Dendritic cell treated with granulocyte-macrophage colony-stimulating factor and Interleukin-4, amounts not matched to agents 40 ng/mL and 50 ng/mL, for 4 days (primary cell): ENCODE measurements at regions of chr11 and their contacts with region 1.

Region 1: DNA sequence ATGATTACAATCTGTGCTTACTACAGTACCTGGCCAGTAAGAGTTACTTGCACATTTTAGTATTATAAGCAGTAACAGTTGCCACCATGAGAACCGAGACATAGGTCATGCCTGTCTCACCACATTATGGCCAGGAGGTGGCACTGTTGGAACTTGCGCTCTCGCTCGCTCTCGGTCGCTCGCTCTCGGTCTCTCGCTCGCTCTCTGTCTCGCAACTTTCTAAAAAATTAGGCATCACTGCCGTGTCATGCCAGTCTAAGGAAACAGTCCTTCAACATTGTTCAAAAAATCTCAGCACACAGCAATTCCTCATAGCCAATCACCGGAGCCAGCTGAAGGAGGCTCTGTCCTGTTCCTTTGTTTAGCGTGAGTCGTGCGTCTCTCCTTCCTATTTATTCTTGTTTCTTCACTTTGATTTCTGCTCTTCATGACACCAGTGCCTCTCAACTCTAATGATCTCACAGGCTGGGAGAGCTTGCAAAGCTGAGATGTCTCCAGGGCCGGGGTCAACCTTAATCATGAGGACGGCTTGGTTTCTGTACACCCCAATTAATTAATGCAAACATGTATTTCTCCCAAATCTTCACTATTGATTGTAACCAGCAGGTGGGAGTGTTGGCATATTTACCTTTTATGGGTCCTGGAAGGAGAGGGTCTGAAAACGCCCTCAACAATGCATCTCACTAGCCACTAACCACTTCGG is 6.3 kb upstream of the ADAMTS8 start:
- H3K4me3 Mint-ChIP-seq: no peak overlapping the region
- H3K27ac Mint-ChIP-seq: no peak overlapping the region
- H3K4me1 Mint-ChIP-seq: peaks cover 12% of the 10 kb centered on the region
- H3K27me3 Mint-ChIP-seq: peaks cover 25% of the 10 kb centered on the region

Region 2: DNA sequence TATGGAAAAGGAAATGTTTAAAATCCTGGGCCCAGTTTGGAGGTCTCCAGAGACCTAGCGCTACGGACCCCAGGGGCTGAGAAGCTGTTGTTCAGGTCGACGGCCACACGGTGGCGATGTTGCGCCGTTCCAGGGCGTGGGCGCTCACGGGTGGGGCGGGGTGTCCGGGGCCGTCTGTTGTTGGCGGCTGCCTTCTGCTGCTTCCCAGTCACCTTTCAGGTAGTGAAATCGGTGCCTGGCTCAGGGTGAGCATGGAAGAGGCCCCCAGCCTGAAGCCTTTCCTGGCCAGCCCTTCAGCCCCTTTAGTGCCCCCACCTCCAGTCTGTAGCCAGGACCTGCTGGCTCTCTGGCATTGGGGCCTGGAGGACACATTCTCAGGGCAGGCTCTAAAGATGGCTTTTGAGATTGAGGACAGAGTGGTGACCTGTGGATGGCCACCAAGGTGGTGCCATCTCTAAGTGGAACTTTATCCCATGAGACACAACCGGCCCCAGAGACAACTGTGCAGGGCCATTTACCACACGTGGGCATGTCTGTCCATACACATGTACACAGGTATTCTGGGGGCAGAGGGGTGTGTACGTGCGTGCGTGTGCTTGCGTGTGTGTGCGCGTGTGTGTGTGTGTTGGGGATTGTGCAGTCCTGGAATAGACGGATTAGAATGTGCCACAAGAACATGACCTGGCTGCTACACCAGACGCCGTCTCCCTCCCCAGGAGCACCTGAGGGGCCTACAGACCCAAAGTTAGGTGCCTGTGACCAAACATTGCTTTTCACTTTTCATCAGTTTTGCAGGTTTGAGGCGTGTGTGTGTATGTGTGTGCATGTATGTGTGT is 221.3 kb before region 1 on chr11:
- intact Hi-C with region 1: loop called (anchors 2 kb)
- H3K4me3 Mint-ChIP-seq: no peak overlapping the region
- H3K27ac Mint-ChIP-seq: no peak overlapping the region
- H3K4me1 Mint-ChIP-seq: no peaks in the 10 kb centered on the region
- H3K27me3 Mint-ChIP-seq: peaks cover 10% of the 10 kb centered on the region

Region 3: GRCh38 chr11:130314750-130315285 is 119.9 kb before region 1 on chr11 and contains the start of gene ZBTB44:
- intact Hi-C with region 1: loop called (anchors 5 kb)
- H3K4me3 Mint-ChIP-seq: peak within 1 kb of the TSS; percentile 83
- H3K27ac Mint-ChIP-seq: peak within 1 kb of the TSS; percentile 84
- H3K4me1 Mint-ChIP-seq: peaks cover 25% of the 10 kb centered on the region
- H3K27me3 Mint-ChIP-seq: peaks cover 11% of the 10 kb centered on the region

Region 4: DNA sequence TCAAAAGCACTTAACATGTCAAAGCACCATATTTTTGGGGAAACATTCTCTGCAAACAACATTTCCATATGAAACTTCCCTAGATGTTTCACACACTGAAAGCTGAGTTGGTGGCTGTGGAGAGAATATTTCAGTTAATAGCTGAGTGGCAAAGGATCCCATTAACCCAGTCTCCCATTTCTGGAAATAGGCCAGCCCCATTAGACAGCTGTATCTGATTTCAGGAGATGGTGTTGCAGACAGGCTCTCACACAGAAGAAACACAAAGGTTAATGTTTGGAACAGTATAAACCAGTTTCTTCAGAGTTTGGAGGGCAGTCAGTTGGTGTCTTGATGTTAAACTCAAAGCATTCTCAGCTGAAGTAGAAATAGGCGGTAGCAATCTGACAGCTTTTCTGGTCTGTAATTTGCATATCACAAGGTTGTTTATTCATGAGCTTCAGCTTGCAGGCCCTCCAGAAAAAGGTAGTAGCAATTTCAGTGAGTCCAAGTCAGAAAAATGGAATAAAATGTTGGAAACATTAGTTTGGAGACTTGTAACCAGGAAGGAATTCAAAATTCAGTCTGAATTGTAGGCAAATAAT is 104.5 kb before region 1 on chr11:
- intact Hi-C with region 1: no loop called
- H3K4me3 Mint-ChIP-seq: no peak overlapping the region
- H3K27ac Mint-ChIP-seq: no peak overlapping the region
- H3K4me1 Mint-ChIP-seq: peaks cover 5% of the 10 kb centered on the region
- H3K27me3 Mint-ChIP-seq: no peaks in the 10 kb centered on the region

Region 5: GRCh38 chr11:130653838-130654636 is 219.4 kb after region 1 on chr11:
- intact Hi-C with region 1: no loop called
- H3K4me3 Mint-ChIP-seq: no peak overlapping the region
- H3K27ac Mint-ChIP-seq: no peak overlapping the region
- H3K4me1 Mint-ChIP-seq: no peaks in the 10 kb centered on the region
- H3K27me3 Mint-ChIP-seq: peaks cover 2% of the 10 kb centered on the region

Region 6: GRCh38 chr11:130666781-130667251 is 232.1 kb after region 1 on chr11:
- intact Hi-C with region 1: loop called (anchors 5 kb)
- H3K4me3 Mint-ChIP-seq: no peak overlapping the region
- H3K27ac Mint-ChIP-seq: no peak overlapping the region
- H3K4me1 Mint-ChIP-seq: no peaks in the 10 kb centered on the region
- H3K27me3 Mint-ChIP-seq: no peaks in the 10 kb centered on the region

Region 7: DNA sequence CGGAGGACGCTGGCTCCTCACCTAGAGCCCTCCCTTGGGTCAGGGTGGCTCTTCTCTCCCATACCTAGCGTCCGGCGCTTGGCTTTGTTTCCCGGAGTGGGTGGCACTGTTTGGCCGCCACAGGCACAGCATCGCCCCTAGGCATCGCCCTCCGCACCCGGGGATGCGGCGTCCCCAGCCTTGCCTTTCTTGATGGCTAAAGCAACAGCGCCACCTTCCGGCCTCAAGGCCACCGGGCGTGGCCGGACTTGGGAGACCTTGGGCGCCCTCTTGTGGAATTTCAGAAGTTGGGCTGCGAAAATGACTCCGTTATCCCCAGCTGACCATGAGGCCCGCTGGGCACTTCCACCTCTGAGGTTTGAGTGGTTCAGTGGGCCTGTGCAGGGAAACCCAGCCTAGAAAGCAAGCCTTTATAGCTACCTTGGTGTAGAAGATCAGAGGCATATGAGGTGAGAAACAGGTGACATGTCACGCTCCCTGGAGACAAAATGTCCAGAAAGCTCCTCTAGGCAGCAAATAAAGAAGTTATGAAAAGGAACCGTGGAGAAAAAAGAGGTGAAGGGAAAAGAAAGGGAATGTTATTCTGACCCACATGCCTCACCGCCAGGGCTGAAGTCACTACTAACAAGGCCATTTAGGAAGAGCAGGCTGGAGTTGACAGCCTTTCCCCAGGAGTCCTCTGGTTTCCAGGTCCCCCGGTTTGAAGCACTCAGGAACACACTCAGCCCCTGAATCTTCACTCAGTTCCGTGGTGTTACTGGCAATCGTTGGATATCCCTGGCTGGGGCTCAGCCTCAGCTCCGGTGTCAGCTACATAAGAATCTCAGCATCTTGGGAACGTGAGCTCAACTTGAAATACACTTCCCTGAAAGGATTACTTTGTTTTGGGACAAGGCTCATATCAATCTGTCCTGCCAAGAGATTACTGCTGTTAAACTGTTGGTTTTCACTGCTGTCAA is 427.5 kb after region 1 on chr11:
- intact Hi-C with region 1: loop called (anchors 1 kb)
- H3K4me3 Mint-ChIP-seq: no peak overlapping the region
- H3K27ac Mint-ChIP-seq: no peak overlapping the region
- H3K4me1 Mint-ChIP-seq: peaks cover 8% of the 10 kb centered on the region
- H3K27me3 Mint-ChIP-seq: no peaks in the 10 kb centered on the region